Activated B cell treated with CpG ODN at 0.5 μM for 24 hours (primary cell): ENCODE measurements at regions of chr1 and their contacts with region 1.

Region 1: DNA sequence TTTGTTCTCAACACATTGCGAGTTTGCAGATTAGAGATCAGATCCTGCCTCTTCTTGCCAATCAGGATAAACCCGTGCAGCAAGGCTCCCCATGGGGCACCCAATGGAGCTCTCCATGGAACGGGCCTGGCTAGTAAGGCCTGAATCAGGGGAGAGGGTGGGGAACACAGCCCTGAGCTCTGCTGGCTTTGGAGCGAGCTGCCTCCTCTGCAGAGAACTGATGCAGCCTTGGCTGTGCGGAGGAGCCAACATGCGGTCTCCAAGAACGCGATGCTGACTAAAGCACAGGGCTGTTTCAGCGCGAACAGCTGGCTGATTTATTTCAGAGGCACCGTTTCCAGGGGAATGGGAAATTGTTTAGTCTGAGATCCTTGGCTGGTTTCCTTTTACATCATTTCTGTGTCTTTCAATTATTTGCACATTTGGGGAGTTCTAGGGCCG is 139.7 kb downstream of the TSEN15 start:
- DNase-seq: no peak
- ATAC-seq: no peak
- H3K4me3 Mint-ChIP-seq: no peak overlapping the region
- H3K27ac Mint-ChIP-seq: no peak overlapping the region
- H3K4me1 Mint-ChIP-seq: no peaks in the 10 kb centered on the region
- H3K27me3 Mint-ChIP-seq: peaks cover 4% of the 10 kb centered on the region
- CTCF ChIP-seq: no peak

Region 2: DNA sequence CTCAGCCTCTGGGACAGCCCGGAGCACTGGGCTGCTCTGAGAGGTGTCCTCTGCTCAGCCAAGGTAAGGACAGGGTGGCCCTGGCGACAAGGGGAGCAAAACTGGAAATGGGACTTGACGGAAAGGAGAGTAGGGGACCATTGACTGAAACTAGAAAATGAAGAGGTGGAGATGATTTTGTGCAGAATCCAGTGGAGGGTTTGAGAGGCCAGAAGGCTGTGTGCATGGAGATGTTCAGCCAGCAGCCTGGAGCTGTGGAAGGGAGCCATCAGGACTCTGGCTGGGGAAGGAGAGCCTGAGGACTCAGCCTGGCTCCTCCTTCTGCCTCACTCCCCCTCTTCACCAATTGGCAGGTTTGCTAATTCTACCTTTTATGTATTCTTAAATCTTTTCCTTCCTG is 449.3 kb after region 1 on chr1:
- CTCF ChIA-PET with region 1: no interaction called
- POLR2A ChIA-PET with region 1: no interaction called
- intact Hi-C with region 1: loop called (anchors 5 kb)
- DNase-seq: no peak
- ATAC-seq: no peak
- H3K4me3 Mint-ChIP-seq: no peak overlapping the region
- H3K27ac Mint-ChIP-seq: no peak overlapping the region
- H3K4me1 Mint-ChIP-seq: no peaks in the 10 kb centered on the region
- H3K27me3 Mint-ChIP-seq: peaks cover 19% of the 10 kb centered on the region
- CTCF ChIP-seq: no peak